ENCODE measurements at regions of chr2 and their contacts with region 1.

Region 1: GRCh38 chr2:172215172-172215935 is 112.7 kb upstream of the DLX2 start:
- DNase-seq: no peak
- H3K4me3 ChIP-seq: no peak overlapping the region
- H3K27ac ChIP-seq: no peak overlapping the region
- H3K4me1 ChIP-seq: peaks cover 5 to 54% (median 31%) of the 10 kb centered on the region in 4 experiments
- H3K27me3 ChIP-seq: no peaks in the 10 kb centered on the region

Region 2: GRCh38 chr2:172234716-172235691 is 19.6 kb after region 1 on chr2:
- CTCF ChIA-PET with region 1: interaction called, 11 read pairs
- POLR2A ChIA-PET with region 1: no interaction called
- DNase-seq: peak; percentile 45 to 94 (median 88)
- H3K4me3 ChIP-seq: peak overlapping the region; percentile 50 to 84 (median 68)
- H3K27ac ChIP-seq: peak overlapping the region; percentile 23 to 46
- H3K4me1 ChIP-seq: peaks cover 3 to 61% (median 49%) of the 10 kb centered on the region in 4 experiments
- H3K27me3 ChIP-seq: no peaks in the 10 kb centered on the region